GM13976 (cell line): ENCODE measurements at regions of chr1 and their contacts with region 1.

Region 1: GRCh38 chr1:241519308-241520079 is at the start of gene FH:
- DNase-seq: peak; percentile 86
- CTCF ChIP-seq: no peak

Region 2: GRCh38 chr1:241834733-241835377 is 315.4 kb after region 1 on chr1:
- in situ Hi-C with region 1: loop called (anchors 10 kb)
- DNase-seq: no peak
- CTCF ChIP-seq: peak; percentile 38

Region 3: GRCh38 chr1:241998412-241998921 is 479.0 kb after region 1 on chr1:
- in situ Hi-C with region 1: loop called (anchors 10 kb)
- DNase-seq: peak; percentile 65
- CTCF ChIP-seq: peak; percentile 56